ENCODE measurements at regions of chr3 and their contacts with region 1.

Region 1: DNA sequence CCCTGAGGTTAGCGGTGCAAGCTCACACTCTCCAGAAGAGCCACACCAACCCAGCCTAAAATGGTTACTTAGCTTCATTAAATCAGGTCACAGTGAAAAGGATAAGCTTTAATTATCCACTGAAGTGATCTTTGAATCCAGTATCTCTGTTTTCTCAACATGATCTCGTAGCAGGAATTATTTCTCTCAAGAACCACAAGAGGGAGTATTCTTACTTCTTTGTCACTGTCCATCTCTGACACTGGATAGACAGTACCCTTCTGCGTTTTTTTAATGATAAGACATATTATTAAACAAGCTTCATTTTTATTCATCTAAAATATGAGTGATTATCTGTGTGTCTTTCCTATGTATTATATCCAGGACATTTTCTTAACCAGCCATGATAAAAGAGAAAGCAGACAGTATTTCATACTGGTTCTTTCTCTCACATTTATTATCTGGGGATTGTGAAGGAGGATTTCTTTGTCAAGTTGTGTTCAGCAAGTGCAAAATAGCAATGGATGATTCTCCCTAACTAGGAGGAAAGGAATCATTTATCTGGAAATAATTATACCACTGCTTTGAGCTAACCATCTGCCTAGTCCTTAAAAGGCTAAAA is 105.4 kb upstream of the CCDC54 start:
- DNase-seq: peak in 4 of 5 donors; percentile 15 to 27 (median 21)
- H3K4me3 ChIP-seq: no peak overlapping the region
- H3K4me3 Mint-ChIP-seq: no peak overlapping the region
- H3K27ac ChIP-seq: no peak overlapping the region
- H3K27ac Mint-ChIP-seq: no peak overlapping the region
- H3K4me1 ChIP-seq: no peaks in the 10 kb centered on the region
- H3K4me1 Mint-ChIP-seq: no peaks in the 10 kb centered on the region
- H3K27me3 ChIP-seq: no peaks in the 10 kb centered on the region
- H3K27me3 Mint-ChIP-seq: peaks cover 10 to 24% of the 10 kb centered on the region in 2 donors

Region 2: GRCh38 chr3:107258300-107258699 is 13.6 kb before region 1 on chr3:
- CTCF ChIA-PET with region 1: interaction called, 13 read pairs
- POLR2A ChIA-PET with region 1: no interaction called
- intact Hi-C with region 1: no loop called
- DNase-seq: no peak
- H3K4me3 ChIP-seq: no peak overlapping the region
- H3K4me3 Mint-ChIP-seq: no peak overlapping the region
- H3K27ac ChIP-seq: no peak overlapping the region
- H3K27ac Mint-ChIP-seq: no peak overlapping the region
- H3K4me1 ChIP-seq: peaks cover 6% of the 10 kb centered on the region
- H3K4me1 Mint-ChIP-seq: peaks cover 0 to 3% (median 2%) of the 10 kb centered on the region in 4 donors
- H3K27me3 ChIP-seq: no peaks in the 10 kb centered on the region
- H3K27me3 Mint-ChIP-seq: peaks cover 11% of the 10 kb centered on the region in 2 donors

Region 3: GRCh38 chr3:107421170-107421792 is 149.4 kb after region 1 on chr3:
- CTCF ChIA-PET with region 1: interaction called, 11 read pairs
- POLR2A ChIA-PET with region 1: interaction called, 3 read pairs
- intact Hi-C with region 1: loop called (anchors 1 kb)
- DNase-seq: peak; percentile 38 to 59 (median 47)
- H3K4me3 ChIP-seq: no peak overlapping the region
- H3K4me3 Mint-ChIP-seq: peak overlapping the region in 7 of 8 donors; percentile 17 to 81 (median 60)
- H3K27ac ChIP-seq: no peak overlapping the region
- H3K27ac Mint-ChIP-seq: peak overlapping the region in 2 of 7 donors; percentile 4 to 83
- H3K4me1 ChIP-seq: no peaks in the 10 kb centered on the region
- H3K4me1 Mint-ChIP-seq: peaks cover 0 to 3% (median 3%) of the 10 kb centered on the region in 4 donors
- H3K27me3 ChIP-seq: no peaks in the 10 kb centered on the region
- H3K27me3 Mint-ChIP-seq: peaks cover 1 to 6% of the 10 kb centered on the region in 2 donors

Region 4: GRCh38 chr3:107458871-107459270 is 187.0 kb after region 1 on chr3:
- CTCF ChIA-PET with region 1: interaction called, 10 read pairs
- POLR2A ChIA-PET with region 1: no interaction called
- intact Hi-C with region 1: no loop called
- DNase-seq: no peak
- H3K4me3 ChIP-seq: no peak overlapping the region
- H3K4me3 Mint-ChIP-seq: no peak overlapping the region
- H3K27ac ChIP-seq: no peak overlapping the region
- H3K27ac Mint-ChIP-seq: no peak overlapping the region
- H3K4me1 ChIP-seq: no peaks in the 10 kb centered on the region
- H3K4me1 Mint-ChIP-seq: no peaks in the 10 kb centered on the region
- H3K27me3 ChIP-seq: no peaks in the 10 kb centered on the region
- H3K27me3 Mint-ChIP-seq: peaks cover 2 to 3% of the 10 kb centered on the region in 2 donors

Region 5: DNA sequence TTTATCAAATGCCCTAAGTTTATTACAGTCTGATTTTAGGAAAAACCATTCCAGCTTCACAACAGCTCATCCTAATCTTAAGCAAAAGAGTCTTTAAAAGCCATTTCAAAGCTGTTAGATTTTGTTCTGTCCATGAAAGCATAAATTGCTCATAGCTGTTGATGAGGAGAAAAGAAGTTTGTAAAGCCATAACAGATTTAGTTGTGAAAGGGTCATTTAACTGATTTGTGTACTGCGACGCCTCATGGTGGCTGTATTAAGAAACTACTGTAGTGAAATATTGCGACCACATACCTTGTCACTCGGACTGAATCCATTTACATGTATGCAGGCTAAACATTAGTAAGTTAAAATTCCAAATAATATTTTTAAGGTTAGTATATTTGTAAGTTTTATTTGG is 271.8 kb after region 1 on chr3:
- CTCF ChIA-PET with region 1: no interaction called
- POLR2A ChIA-PET with region 1: no interaction called
- intact Hi-C with region 1: loop called (anchors 1 kb)
- DNase-seq: peak in 1 of 5 donors; percentile 3
- H3K4me3 ChIP-seq: no peak overlapping the region
- H3K4me3 Mint-ChIP-seq: no peak overlapping the region
- H3K27ac ChIP-seq: no peak overlapping the region
- H3K27ac Mint-ChIP-seq: no peak overlapping the region
- H3K4me1 ChIP-seq: no peaks in the 10 kb centered on the region
- H3K4me1 Mint-ChIP-seq: peaks cover 15 to 43% (median 28%) of the 10 kb centered on the region in 4 donors
- H3K27me3 ChIP-seq: no peaks in the 10 kb centered on the region
- H3K27me3 Mint-ChIP-seq: no peaks in the 10 kb centered on the region

Measured in CD4-positive, alpha-beta memory T cell (primary cell).